HepG2 (cell line): ENCODE measurements at regions of chr14 and their contacts with region 1.

Region 1: GRCh38 chr14:94536823-94537222 is 24.4 kb upstream of the SERPINA4 start:
- DNase-seq: peak; percentile 71
- ATAC-seq: peak; percentile 64
- H3K4me3 ChIP-seq: no peak overlapping the region
- H3K27ac ChIP-seq: no peak overlapping the region
- H3K4me1 ChIP-seq: peaks cover 69% of the 10 kb centered on the region
- H3K27me3 ChIP-seq: no peaks in the 10 kb centered on the region
- CTCF ChIP-seq: peak; percentile 72
- EP300 ChIP-seq: no peak
- POLR2A ChIP-seq: no peak
- RAD21 ChIP-seq: peak; percentile 63

Region 2: GRCh38 chr14:92800012-92800411 is 1736.8 kb before region 1 on chr14:
- CTCF ChIA-PET with region 1: no interaction called
- POLR2A ChIA-PET with region 1: no interaction called
- in situ Hi-C with region 1: no loop called
- intact Hi-C with region 1: loop called (anchors 5 kb)
- DNase-seq: no peak
- ATAC-seq: no peak
- H3K4me3 ChIP-seq: no peak overlapping the region
- H3K27ac ChIP-seq: no peak overlapping the region
- H3K4me1 ChIP-seq: peaks cover 66% of the 10 kb centered on the region
- H3K27me3 ChIP-seq: no peaks in the 10 kb centered on the region
- CTCF ChIP-seq: no peak
- EP300 ChIP-seq: no peak
- POLR2A ChIP-seq: no peak
- RAD21 ChIP-seq: no peak

Region 3: GRCh38 chr14:94439453-94440057 is 97.3 kb before region 1 on chr14:
- CTCF ChIA-PET with region 1: interaction called, 9 read pairs
- POLR2A ChIA-PET with region 1: no interaction called
- in situ Hi-C with region 1: no loop called
- intact Hi-C with region 1: loop called (anchors 1 kb)
- DNase-seq: no peak
- ATAC-seq: peak; percentile 66
- H3K4me3 ChIP-seq: no peak overlapping the region
- H3K27ac ChIP-seq: no peak overlapping the region
- H3K4me1 ChIP-seq: peaks cover 19% of the 10 kb centered on the region
- H3K27me3 ChIP-seq: no peaks in the 10 kb centered on the region
- CTCF ChIP-seq: no peak
- EP300 ChIP-seq: no peak
- POLR2A ChIP-seq: peak in 1 of 2 experiments; percentile 35; a peak in 1 of 4 replicates
- RAD21 ChIP-seq: no peak

Region 4: GRCh38 chr14:94505641-94506040 is 31.2 kb before region 1 on chr14:
- CTCF ChIA-PET with region 1: no interaction called
- POLR2A ChIA-PET with region 1: interaction called, 3 read pairs
- in situ Hi-C with region 1: no loop called
- intact Hi-C with region 1: loop called (anchors 5 kb)
- DNase-seq: no peak
- ATAC-seq: peak; percentile 25
- H3K4me3 ChIP-seq: no peak overlapping the region
- H3K27ac ChIP-seq: no peak overlapping the region
- H3K4me1 ChIP-seq: peaks cover 31% of the 10 kb centered on the region
- H3K27me3 ChIP-seq: no peaks in the 10 kb centered on the region
- CTCF ChIP-seq: no peak
- EP300 ChIP-seq: no peak
- POLR2A ChIP-seq: peak in 1 of 2 experiments; percentile 19; a peak in 1 of 4 replicates
- RAD21 ChIP-seq: no peak

Region 5: GRCh38 chr14:94681300-94682060 is 144.7 kb after region 1 on chr14:
- CTCF ChIA-PET with region 1: no interaction called
- POLR2A ChIA-PET with region 1: no interaction called
- in situ Hi-C with region 1: loop called (anchors 10 kb)
- intact Hi-C with region 1: loop called (anchors 5 kb)
- DNase-seq: peak; percentile 78
- ATAC-seq: peak; percentile 78
- H3K4me3 ChIP-seq: no peak overlapping the region; a peak in 1 of 6 replicates
- H3K27ac ChIP-seq: peak overlapping the region; percentile 80
- H3K4me1 ChIP-seq: peaks cover 66% of the 10 kb centered on the region
- H3K27me3 ChIP-seq: peaks cover 5 to 9% of the 10 kb centered on the region in 2 experiments; a peak in 3 of 5 replicates
- CTCF ChIP-seq: peak; percentile 95
- EP300 ChIP-seq: 0 out of 4 replicates have a peak, but pooled peaks of 1 of the 2 experiments have one; percentile 40
- POLR2A ChIP-seq: no peak
- RAD21 ChIP-seq: peak; percentile 90